ENCODE measurements at regions of chr3 and their contacts with region 1.

Region 1: DNA sequence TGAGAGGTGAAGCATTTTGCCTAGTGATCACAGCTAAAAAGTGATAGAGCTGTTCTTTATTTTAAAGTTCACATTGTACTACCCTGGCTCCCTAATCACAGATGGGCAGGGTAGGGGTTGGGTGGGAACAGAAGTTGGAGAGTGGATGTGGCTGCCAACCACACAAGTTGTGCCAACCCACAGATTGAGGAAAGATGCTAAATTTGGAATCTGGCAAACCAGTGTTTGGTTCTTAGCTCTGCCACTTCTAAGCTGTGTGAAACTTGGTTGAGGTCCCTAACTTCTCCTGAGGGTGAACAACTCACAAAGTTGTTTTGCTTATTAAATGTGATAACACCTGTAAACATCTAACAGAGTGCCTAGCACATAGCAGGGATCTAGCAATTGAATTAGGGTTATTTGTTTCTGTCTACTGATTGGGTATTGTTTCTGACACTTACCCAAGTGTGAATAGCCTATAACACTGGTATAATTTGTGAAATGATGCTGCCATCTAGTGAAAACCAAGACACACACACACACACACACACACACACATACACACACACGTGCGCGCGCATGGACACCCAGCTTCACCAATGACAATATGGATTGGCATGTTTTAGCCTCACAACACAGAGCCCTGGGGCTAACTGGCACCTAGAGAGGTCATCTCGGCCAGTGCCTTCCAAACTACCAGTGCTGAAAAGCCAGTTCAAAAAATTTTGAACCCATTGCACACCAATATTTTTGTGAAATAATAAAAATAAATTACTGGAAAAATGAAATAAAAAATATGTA is 25.3 kb downstream of the ADGRG7 start:
- DNase-seq: peak; percentile 40
- H3K4me3 ChIP-seq: no peak overlapping the region
- H3K27ac ChIP-seq: no peak overlapping the region
- H3K4me1 ChIP-seq: peaks cover 7% of the 10 kb centered on the region
- H3K27me3 ChIP-seq: no peaks in the 10 kb centered on the region
- CTCF ChIP-seq: peak in 1 of 2 donors; percentile 6
- POLR2A ChIP-seq: no peak

Region 2: GRCh38 chr3:100316641-100317069 is 318.0 kb before region 1 on chr3:
- CTCF ChIA-PET with region 1: interaction called, 10 read pairs
- POLR2A ChIA-PET with region 1: no interaction called
- dilution Hi-C with region 1: no loop called
- intact Hi-C with region 1: no loop called
- DNase-seq: peak; percentile 64
- H3K4me3 ChIP-seq: no peak overlapping the region
- H3K27ac ChIP-seq: no peak overlapping the region
- H3K4me1 ChIP-seq: no peaks in the 10 kb centered on the region
- H3K27me3 ChIP-seq: no peaks in the 10 kb centered on the region
- CTCF ChIP-seq: peak; percentile 46 to 48
- POLR2A ChIP-seq: no peak

Measured in endothelial cell of umbilical vein (primary cell).